ENCODE measurements at regions of chr17 and their contacts with region 1.

Region 1: DNA sequence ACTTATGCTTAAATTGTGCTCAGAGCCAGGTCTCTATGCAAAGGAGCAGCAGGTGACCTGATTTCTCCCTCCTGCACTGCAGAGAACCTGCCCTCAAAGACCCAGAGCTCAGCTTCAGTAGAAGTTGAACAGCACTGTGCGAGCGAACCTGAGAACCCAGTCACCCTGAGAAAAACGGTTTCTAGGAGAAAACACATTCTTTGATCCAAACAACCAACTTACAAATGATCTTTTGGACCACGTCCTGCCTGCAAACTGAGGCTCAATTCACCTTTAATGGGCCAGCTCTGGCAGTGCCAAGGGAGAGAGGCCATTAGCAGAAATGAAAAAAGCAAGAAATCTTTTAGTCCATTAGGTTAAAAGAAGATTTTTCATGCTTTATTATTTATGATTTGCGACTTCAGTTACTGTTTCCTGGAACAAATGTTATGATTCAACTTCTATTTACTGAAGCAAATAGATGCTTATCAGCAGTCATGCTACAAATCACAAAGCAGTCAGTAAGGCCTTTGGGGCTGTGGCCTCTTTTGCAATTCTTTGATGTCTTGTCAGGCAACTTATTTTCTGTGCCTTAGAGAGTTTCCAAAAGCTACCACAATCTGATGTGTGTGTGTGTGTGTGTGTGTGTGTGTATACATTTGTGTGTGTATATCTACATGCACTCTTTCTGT is 65.7 kb upstream of the LRRC37A3 start:
- DNase-seq: no peak
- ATAC-seq: no peak
- H3K4me3 Mint-ChIP-seq: peak overlapping the region; percentile 81
- H3K27ac Mint-ChIP-seq: peak overlapping the region; percentile 99
- H3K4me1 Mint-ChIP-seq: peaks cover 64% of the 10 kb centered on the region
- H3K27me3 Mint-ChIP-seq: no peaks in the 10 kb centered on the region
- CTCF ChIP-seq: no peak

Region 2: DNA sequence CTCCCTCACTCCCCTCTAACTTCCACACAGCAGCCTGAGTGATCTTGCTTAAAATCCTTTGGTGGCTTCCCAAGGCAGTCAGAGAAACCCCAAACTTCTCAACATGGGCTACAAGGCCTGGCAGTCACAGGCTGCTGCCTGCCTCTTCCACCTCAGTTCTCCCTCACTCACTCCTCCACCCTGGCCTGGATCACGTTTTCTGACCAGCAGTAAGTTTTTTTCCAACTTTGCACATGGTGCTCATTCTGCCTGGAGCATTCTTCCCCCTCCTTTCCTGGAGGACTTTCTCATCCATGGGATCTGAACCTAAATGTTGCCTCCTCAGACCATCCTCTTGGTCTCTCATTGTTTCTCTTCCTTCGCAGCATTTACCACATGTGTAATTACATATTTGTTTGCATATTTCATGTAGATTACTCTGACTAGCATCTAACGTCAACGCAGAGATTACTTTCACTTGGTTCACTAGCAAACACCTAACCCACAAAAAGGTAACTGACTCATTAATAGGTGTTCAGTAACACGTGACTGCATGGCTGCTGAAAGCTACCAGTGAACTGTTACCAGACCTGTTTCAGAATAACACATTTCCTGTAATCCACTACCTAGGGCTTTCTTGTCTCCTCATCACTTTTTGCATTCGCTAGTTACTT is 54.5 kb after region 1 on chr17:
- CTCF ChIA-PET with region 1: interaction called, 4 read pairs
- POLR2A ChIA-PET with region 1: interaction called, 10 read pairs
- intact Hi-C with region 1: no loop called
- DNase-seq: no peak
- ATAC-seq: peak; percentile 73
- H3K4me3 Mint-ChIP-seq: peak overlapping the region; percentile 53
- H3K27ac Mint-ChIP-seq: peak overlapping the region; percentile 85
- H3K4me1 Mint-ChIP-seq: peaks cover 92% of the 10 kb centered on the region
- H3K27me3 Mint-ChIP-seq: no peaks in the 10 kb centered on the region
- CTCF ChIP-seq: no peak

Region 3: DNA sequence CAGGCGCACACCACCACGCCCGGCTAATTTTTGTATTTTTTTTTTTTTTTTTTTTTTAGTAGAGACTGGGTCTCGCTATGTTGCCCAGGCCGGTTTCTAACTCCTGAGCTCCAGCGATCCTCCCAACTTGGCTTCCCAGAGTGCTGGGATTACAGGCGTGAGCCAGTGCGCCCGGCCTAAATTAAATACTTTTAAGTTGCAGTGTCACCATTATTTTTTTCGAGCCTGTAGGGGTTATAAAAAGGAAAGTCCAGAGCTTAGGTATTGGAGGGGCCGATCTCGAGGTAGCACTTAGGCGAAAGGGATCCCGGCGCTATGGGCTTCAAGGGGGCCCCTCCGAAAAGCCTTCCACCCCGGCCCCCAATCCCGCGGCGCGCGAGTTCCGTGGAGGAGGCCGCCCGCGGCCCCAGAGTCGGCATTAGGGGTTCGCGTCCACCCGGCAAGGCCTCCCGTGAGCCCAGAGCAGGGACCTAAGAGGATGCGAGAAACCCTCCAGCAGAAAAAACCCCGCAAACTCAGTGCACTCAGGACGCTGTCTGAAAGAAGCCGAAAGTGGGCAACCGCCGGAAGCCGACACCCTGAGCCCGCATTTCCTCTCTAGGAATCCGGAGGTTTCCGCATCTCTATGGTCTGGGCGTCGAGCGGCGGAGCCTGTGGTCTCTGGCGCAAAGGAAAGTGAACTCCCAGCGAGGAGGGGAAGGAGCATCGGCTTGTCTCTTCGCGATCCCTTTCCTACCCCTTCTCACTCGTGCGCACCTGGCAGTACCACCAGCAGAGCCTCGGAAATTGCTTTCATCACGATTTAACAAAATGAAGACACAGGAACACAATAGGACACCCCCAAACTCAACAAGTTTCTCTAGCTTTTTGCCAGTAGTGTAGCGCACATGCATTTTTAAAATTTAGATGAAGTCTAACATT is 138.1 kb after region 1 on chr17:
- CTCF ChIA-PET with region 1: no interaction called
- POLR2A ChIA-PET with region 1: interaction called, 6 read pairs
- intact Hi-C with region 1: loop called (anchors 1 kb)
- DNase-seq: peak; percentile 64
- ATAC-seq: peak; percentile 85
- H3K4me3 Mint-ChIP-seq: peak overlapping the region; percentile 87
- H3K27ac Mint-ChIP-seq: peak overlapping the region; percentile 96
- H3K4me1 Mint-ChIP-seq: peaks cover 18% of the 10 kb centered on the region
- H3K27me3 Mint-ChIP-seq: peaks cover 5% of the 10 kb centered on the region
- CTCF ChIP-seq: no peak

Region 4: GRCh38 chr17:65173284-65173793 is 188.4 kb after region 1 on chr17:
- CTCF ChIA-PET with region 1: no interaction called
- POLR2A ChIA-PET with region 1: no interaction called
- intact Hi-C with region 1: no loop called
- DNase-seq: no peak
- ATAC-seq: peak; percentile 65
- H3K4me3 Mint-ChIP-seq: no peak overlapping the region
- H3K27ac Mint-ChIP-seq: no peak overlapping the region
- H3K4me1 Mint-ChIP-seq: peaks cover 10% of the 10 kb centered on the region
- H3K27me3 Mint-ChIP-seq: peaks cover 3% of the 10 kb centered on the region
- CTCF ChIP-seq: no peak

Region 5: GRCh38 chr17:65604070-65604469 is 619.1 kb after region 1 on chr17:
- CTCF ChIA-PET with region 1: no interaction called
- POLR2A ChIA-PET with region 1: no interaction called
- intact Hi-C with region 1: no loop called
- DNase-seq: no peak
- ATAC-seq: no peak
- H3K4me3 Mint-ChIP-seq: no peak overlapping the region
- H3K27ac Mint-ChIP-seq: no peak overlapping the region
- H3K4me1 Mint-ChIP-seq: no peaks in the 10 kb centered on the region
- H3K27me3 Mint-ChIP-seq: peaks cover 4% of the 10 kb centered on the region
- CTCF ChIP-seq: no peak

Measured in activated B cell treated with CpG ODN at 0.5 μM for 24 hours (primary cell).